Activated CD4-positive, alpha-beta T cell treated with anti-CD3 and anti-CD28 coated beads for 36 hours (primary cell): ENCODE measurements at regions of chr2 and their contacts with region 1.

Region 1: DNA sequence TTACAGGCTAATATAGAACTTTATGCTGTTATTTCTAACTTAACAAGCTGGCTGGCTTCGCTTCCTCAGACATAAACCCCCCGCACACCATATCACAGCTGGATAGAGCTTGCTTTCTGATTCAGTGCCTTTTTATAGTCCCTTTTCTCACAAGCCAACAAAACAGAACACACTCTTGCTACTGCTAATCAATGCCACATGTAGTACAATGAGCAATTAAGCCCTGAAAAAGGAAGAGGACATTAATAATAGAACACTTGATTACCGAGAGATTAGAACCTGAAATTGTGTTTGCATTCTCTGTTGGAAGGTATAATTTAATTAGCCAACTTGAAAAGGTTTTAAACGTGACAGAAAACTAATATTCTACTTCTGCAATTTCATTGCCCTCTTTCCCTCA is 267.7 kb upstream of the CYRIA start:
- DNase-seq: no peak
- ATAC-seq: no peak
- H3K4me3 Mint-ChIP-seq: no peak overlapping the region
- H3K27ac Mint-ChIP-seq: no peak overlapping the region
- H3K4me1 Mint-ChIP-seq: no peaks in the 10 kb centered on the region
- H3K27me3 Mint-ChIP-seq: no peaks in the 10 kb centered on the region

Region 2: GRCh38 chr2:16881136-16881535 is 52.2 kb before region 1 on chr2:
- CTCF ChIA-PET with region 1: no interaction called
- POLR2A ChIA-PET with region 1: no interaction called
- intact Hi-C with region 1: no loop called
- DNase-seq: no peak
- ATAC-seq: no peak
- H3K4me3 Mint-ChIP-seq: no peak overlapping the region
- H3K27ac Mint-ChIP-seq: no peak overlapping the region
- H3K4me1 Mint-ChIP-seq: no peaks in the 10 kb centered on the region
- H3K27me3 Mint-ChIP-seq: no peaks in the 10 kb centered on the region

Region 3: GRCh38 chr2:16948053-16948452 is 14.7 kb after region 1 on chr2:
- CTCF ChIA-PET with region 1: interaction called, 3 read pairs
- POLR2A ChIA-PET with region 1: no interaction called
- intact Hi-C with region 1: loop called in 1 of 2 experiments (anchors 1 kb)
- DNase-seq: no peak
- ATAC-seq: no peak
- H3K4me3 Mint-ChIP-seq: no peak overlapping the region
- H3K27ac Mint-ChIP-seq: no peak overlapping the region
- H3K4me1 Mint-ChIP-seq: no peaks in the 10 kb centered on the region
- H3K27me3 Mint-ChIP-seq: no peaks in the 10 kb centered on the region